ENCODE measurements at regions of chr2 and their contacts with region 1.

Region 1: GRCh38 chr2:169584005-169584877 is at the start of gene PPIG:
- DNase-seq: peak; percentile 91
- ATAC-seq: peak; percentile 96
- H3K4me3 ChIP-seq: peak within 1 kb of the TSS; percentile 74
- H3K27ac ChIP-seq: peak within 1 kb of the TSS; percentile 95
- H3K4me1 ChIP-seq: no peaks in the 10 kb centered on the region
- H3K27me3 ChIP-seq: no peaks in the 10 kb centered on the region
- CTCF ChIP-seq: no peak
- POLR2A ChIP-seq: peak; percentile 86
- RAD21 ChIP-seq: no peak
- total RNA-seq, gene PPIG: 10.4 and 30.8 TPM in 2 replicates

Region 2: GRCh38 chr2:169619946-169620345 is 35.7 kb after region 1 on chr2:
- CTCF ChIA-PET with region 1: no interaction called
- POLR2A ChIA-PET with region 1: no interaction called
- dilution Hi-C with region 1: no loop called
- in situ Hi-C with region 1: no loop called
- intact Hi-C with region 1: loop called (anchors 5 kb)
- DNase-seq: no peak
- ATAC-seq: no peak
- H3K4me3 ChIP-seq: no peak overlapping the region
- H3K27ac ChIP-seq: no peak overlapping the region
- H3K4me1 ChIP-seq: no peaks in the 10 kb centered on the region
- H3K27me3 ChIP-seq: no peaks in the 10 kb centered on the region
- CTCF ChIP-seq: no peak
- POLR2A ChIP-seq: no peak
- RAD21 ChIP-seq: no peak

Region 3: DNA sequence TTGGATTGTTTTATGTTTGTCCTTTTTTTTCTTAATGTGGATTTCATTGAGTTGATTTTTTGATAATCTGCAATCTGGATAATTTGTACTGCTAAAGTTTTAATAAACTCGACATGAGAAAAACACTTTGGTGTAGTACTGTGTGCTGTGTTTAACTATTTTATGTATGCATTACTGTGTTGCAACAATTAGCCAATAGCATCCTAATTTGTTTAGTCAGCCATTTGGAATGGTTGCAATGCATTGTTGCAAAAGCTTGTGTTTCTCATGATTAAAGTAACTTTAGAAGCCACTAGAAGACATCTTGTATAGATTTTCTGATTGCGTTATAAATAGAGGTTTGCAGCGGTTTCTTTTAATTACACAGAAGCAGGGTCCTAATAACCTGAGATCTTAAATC is 53.4 kb after region 1 on chr2:
- CTCF ChIA-PET with region 1: no interaction called
- POLR2A ChIA-PET with region 1: no interaction called
- dilution Hi-C with region 1: no loop called
- in situ Hi-C with region 1: no loop called
- intact Hi-C with region 1: loop called (anchors 2 kb)
- DNase-seq: peak; percentile 81
- ATAC-seq: peak; percentile 63
- H3K4me3 ChIP-seq: no peak overlapping the region
- H3K27ac ChIP-seq: no peak overlapping the region
- H3K4me1 ChIP-seq: peaks cover 3% of the 10 kb centered on the region; the same call in 1 of the 2 replicates
- H3K27me3 ChIP-seq: no peaks in the 10 kb centered on the region
- CTCF ChIP-seq: no peak
- POLR2A ChIP-seq: no peak
- RAD21 ChIP-seq: no peak